ENCODE measurements at regions of chr6 and their contacts with region 1.

Region 1: DNA sequence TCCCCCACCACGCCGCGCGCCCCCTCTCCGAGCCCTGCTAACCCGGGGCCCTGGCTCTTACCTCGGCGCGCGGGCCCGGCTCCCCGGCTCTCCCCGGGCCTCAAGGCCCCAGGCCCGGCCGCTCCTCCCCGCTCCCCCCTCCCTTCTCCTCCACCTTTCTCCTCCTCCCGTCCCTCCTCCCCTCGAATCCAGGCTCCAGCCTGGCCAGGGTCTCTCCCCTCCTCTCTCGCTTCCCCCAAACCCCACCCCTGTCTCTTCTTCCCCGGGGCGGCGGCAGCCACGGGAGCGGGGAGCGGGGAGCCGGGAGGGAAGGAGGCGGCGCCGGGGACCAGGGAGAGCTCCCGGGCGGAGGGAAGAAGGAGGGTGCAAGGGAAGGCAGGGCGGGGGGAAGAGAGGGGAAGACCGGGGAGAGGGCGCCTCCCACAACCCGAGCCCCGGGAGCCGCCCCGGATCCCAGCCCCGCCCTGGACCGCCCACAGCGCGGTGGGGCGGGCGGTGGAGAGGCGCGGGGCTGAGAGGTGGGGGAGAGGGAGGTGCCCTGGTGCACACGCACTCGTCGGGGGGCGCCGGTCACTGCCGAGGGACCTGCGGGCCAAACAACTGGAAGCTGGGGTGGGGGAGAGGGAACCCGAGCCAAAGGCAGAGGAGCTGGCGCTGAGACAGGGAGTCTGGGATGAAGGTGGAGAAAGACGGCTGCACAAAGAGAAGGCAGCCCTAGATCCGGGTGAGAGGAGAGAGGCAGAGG is at the start of gene GABBR1:
- H3K4me3 ChIP-seq: peak within 1 kb of the TSS; percentile 77
- H3K27ac ChIP-seq: peak within 1 kb of the TSS; percentile 42; the same call in 1 of the 2 replicates
- H3K4me1 ChIP-seq: peaks cover 4% of the 10 kb centered on the region; the same call in 1 of the 2 replicates
- CTCF ChIP-seq: peak; percentile 45; the same call in 1 of the 2 replicates

Region 2: DNA sequence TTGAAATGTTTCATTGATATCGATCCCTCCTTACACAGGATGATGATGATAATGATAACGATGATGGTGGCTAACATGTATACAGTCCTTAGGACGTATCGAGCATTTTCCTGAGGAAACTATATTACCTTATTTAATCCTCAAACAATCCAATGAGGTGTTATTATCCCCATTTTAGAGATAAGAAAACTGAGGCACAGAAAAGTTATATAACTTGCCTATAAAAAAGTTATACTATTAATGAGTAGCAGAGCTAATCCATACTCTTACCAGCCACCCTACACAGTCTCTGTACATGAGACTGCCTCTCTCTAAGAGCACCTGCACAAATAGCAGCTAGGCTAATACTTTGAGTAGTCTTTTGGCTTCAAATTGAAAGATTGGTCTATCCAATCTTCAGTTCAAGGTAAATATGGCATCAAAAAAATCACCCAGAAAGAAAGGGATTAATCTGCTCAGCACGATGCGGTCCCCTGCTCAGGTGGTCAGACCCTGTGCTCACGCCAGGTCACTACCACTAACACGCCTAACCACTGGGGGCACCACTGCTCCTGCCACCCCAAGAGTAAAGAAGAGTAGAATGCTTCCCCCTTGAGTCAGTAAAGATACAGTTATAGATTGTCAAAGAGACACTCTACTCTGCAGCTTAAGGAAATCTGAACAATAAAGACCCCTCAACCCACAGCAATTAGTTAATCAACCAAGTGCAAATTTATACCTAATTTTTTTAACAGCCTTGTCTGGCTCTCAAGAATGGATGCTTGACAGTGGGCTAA is 15.0 kb before region 1 on chr6:
- CTCF ChIA-PET with region 1: interaction called, 12 read pairs
- POLR2A ChIA-PET with region 1: interaction called, 7 read pairs
- H3K4me3 ChIP-seq: no peak overlapping the region
- H3K27ac ChIP-seq: no peak overlapping the region
- H3K4me1 ChIP-seq: no peaks in the 10 kb centered on the region
- CTCF ChIP-seq: no peak

Measured in HEK293 (cell line).